ENCODE measurements at regions of chr16 and their contacts with region 1.

Region 1: GRCh38 chr16:714558-715476 is at the start of gene METRN:
- DNase-seq: peak; percentile 92
- H3K4me3 ChIP-seq: peak within 1 kb of the TSS; percentile 66 to 70
- H3K27ac ChIP-seq: peak within 1 kb of the TSS; percentile 56 to 91; a peak in 3 of 4 replicates
- H3K4me1 ChIP-seq: peaks cover 23 to 51% of the 10 kb centered on the region in 2 experiments; a peak in 3 of 4 replicates
- H3K27me3 ChIP-seq: no peaks in the 10 kb centered on the region
- CTCF ChIP-seq: no peak
- EP300 ChIP-seq: no peak
- RAD21 ChIP-seq: no peak
- polyA plus RNA-seq, gene METRN: 52.4 and 59.7 TPM in 2 replicates

Region 2: DNA sequence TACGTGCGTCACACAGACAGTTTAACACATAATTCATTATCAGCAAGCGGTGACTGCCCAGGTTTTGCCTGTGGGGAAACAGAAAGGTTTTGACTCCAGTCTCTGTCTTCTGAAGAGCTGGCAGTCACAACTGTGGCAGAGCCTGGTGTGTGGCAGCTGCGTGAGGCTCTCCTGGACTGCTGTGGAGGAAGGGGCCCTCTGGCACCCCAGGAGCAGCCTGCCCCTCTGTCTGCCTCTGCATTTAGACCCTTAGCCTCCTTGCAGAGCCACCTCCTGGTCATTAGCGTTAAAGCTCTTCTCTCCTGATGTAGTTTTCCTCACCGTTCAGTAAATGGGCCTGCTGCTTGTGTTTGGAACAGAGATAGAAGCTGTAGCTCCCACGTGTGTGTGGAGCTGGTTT is 114.0 kb before region 1 on chr16:
- CTCF ChIA-PET with region 1: no interaction called
- POLR2A ChIA-PET with region 1: no interaction called
- DNase-seq: peak; percentile 70
- H3K4me3 ChIP-seq: no peak overlapping the region; a peak in 1 of 4 replicates
- H3K27ac ChIP-seq: no peak overlapping the region
- H3K4me1 ChIP-seq: peaks cover 0 to 6% of the 10 kb centered on the region in 2 experiments; a peak in 1 of 4 replicates
- H3K27me3 ChIP-seq: no peaks in the 10 kb centered on the region
- CTCF ChIP-seq: peak; percentile 30; the same call in 1 of the 2 replicates
- EP300 ChIP-seq: no peak
- RAD21 ChIP-seq: peak; percentile 37

Region 3: DNA sequence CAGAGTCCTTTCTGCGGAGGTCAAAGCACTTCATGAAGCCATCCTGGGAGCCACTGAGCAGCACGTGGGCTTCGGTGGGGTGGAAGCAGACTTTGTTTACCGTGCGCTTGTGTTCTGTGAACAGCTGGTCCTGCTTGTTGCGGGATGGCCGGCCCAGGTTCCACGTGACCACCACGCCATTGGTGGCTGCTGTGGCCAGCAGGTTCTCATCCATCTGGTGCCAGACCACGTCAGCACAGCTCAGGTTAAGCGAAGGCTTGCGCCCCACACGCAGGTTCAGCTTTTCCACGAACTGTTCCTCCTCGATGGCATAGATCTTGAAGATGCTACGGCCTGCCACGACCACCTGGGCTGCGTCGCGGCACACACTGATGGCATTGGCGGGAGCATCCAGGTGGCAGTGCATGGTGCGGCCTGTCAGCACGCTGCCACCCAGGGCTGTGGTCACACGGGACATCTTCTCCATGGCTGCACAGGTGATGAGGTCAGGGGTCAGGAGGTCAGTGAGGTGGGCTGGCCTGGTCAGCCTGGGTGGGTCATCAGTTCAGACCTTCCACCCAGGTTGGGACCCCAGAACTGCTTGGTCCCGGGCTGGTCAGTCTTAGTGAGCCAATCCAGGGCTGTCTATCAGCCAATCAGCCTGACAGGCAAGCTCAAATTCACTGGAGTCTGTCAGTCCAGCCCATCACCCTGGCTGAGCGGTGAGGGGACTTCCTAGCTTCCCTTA is 25.5 kb before region 1 on chr16:
- CTCF ChIA-PET with region 1: interaction called, 13 read pairs
- POLR2A ChIA-PET with region 1: interaction called, 4 read pairs
- DNase-seq: no peak
- H3K4me3 ChIP-seq: peak overlapping the region; percentile 93 to 98
- H3K27ac ChIP-seq: peak overlapping the region; percentile 62 to 82; a peak in 2 of 4 replicates
- H3K4me1 ChIP-seq: peaks cover 9 to 30% of the 10 kb centered on the region in 2 experiments; a peak in 2 of 4 replicates
- H3K27me3 ChIP-seq: no peaks in the 10 kb centered on the region
- CTCF ChIP-seq: no peak
- EP300 ChIP-seq: no peak
- RAD21 ChIP-seq: no peak

Region 4: GRCh38 chr16:728131-728889 is 13.5 kb after region 1 on chr16:
- CTCF ChIA-PET with region 1: interaction called, 358 read pairs
- POLR2A ChIA-PET with region 1: interaction called, 16 read pairs
- DNase-seq: peak; percentile 96
- H3K4me3 ChIP-seq: peak overlapping the region; percentile 29 to 78; a peak in 3 of 4 replicates
- H3K27ac ChIP-seq: peak overlapping the region in 1 of 2 experiments; percentile 89; a peak in 2 of 4 replicates
- H3K4me1 ChIP-seq: peaks cover 0 to 14% of the 10 kb centered on the region in 2 experiments; a peak in 1 of 4 replicates
- H3K27me3 ChIP-seq: no peaks in the 10 kb centered on the region
- CTCF ChIP-seq: no peak
- EP300 ChIP-seq: no peak
- RAD21 ChIP-seq: no peak

Measured in SK-N-SH (cell line).